ENCODE measurements at regions of chr6 and their contacts with region 1.

Region 1: GRCh38 chr6:88165844-88166492 is at the start of gene CNR1:
- DNase-seq: peak; percentile 83
- H3K4me3 ChIP-seq: peak within 1 kb of the TSS; percentile 97
- H3K27ac ChIP-seq: peak within 1 kb of the TSS; percentile 80
- H3K4me1 ChIP-seq: peaks cover 45% of the 10 kb centered on the region
- CTCF ChIP-seq: peak; percentile 36; the same call in 1 of the 2 replicates
- total RNA-seq, gene CNR1: 109 and 150 TPM in 2 replicates

Region 2: GRCh38 chr6:87472525-87473418 is 693.2 kb before region 1 on chr6 and contains the start of gene SLC35A1:
- CTCF ChIA-PET with region 1: no interaction called
- POLR2A ChIA-PET with region 1: interaction called, 3 read pairs
- intact Hi-C with region 1: loop called (anchors 5 kb)
- DNase-seq: peak; percentile 86
- H3K4me3 ChIP-seq: peak within 1 kb of the TSS; percentile 74
- H3K27ac ChIP-seq: peak within 1 kb of the TSS; percentile 35
- H3K4me1 ChIP-seq: peaks cover 25% of the 10 kb centered on the region
- CTCF ChIP-seq: 0 out of 2 replicates have a peak, but pooled peaks have one; percentile 27
- total RNA-seq, gene SLC35A1: 17.0 and 17.2 TPM in 2 replicates

Region 3: DNA sequence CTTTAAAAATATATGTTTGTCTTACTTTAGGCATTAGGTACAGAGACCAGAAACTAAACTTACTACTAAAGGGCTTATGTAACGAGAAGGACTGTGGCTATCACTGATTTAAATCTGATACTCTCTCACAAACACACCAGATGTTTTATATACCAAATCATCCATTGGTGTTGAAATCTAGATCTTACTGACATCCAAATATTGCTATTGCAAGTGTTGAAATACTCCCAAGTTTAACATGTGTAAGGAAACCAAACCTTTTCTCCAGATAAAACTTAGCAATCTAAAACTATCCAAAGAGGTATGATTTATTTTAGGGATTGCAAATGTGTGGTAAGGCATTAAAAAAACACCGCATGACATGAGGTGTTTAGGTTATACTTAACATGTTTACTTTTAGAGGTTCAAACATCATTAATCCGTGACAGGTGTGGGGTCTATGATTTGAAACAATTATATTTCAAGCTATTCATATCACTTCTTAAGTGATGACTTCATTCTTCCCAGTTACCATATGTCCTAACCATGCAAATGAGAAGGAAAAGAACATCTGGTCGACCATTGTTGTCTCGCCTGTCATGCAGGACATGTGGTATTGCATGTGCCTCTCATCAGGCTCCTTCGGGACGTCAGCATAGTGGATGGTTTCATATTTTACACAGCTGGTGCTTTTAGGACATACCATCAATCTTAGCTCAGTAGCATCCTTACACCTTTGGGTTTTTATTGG is 286.7 kb before region 1 on chr6:
- CTCF ChIA-PET with region 1: no interaction called
- POLR2A ChIA-PET with region 1: interaction called, 12 read pairs
- intact Hi-C with region 1: loop called (anchors 1 kb)
- DNase-seq: peak; percentile 100
- H3K4me3 ChIP-seq: peak overlapping the region; percentile 11
- H3K27ac ChIP-seq: peak overlapping the region; percentile 99
- H3K4me1 ChIP-seq: peaks cover 78% of the 10 kb centered on the region
- CTCF ChIP-seq: no peak

Region 4: DNA sequence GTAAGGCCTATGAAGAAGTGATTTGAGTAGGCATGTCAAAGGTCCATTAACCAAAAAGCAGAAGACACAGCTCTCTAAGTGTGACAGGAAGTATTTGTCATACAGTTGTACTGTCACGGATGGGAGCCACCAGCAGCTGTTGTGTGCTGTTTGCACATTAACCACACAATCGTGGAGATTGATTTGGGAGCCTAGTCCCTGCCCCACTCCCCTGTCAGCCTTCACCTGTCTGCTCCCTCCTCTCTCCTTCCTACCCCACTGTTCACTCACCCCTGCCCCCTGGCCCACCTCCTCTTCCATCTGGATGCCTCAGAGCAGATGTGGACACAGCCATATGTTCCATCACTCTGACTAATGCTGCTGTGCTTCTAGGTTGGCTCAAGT is 243.0 kb before region 1 on chr6:
- CTCF ChIA-PET with region 1: no interaction called
- POLR2A ChIA-PET with region 1: interaction called, 153 read pairs
- intact Hi-C with region 1: loop called (anchors 1 kb)
- DNase-seq: peak; percentile 98
- H3K4me3 ChIP-seq: peak overlapping the region; percentile 31
- H3K27ac ChIP-seq: peak overlapping the region; percentile 99
- H3K4me1 ChIP-seq: peaks cover 99% of the 10 kb centered on the region
- CTCF ChIP-seq: no peak

Region 5: DNA sequence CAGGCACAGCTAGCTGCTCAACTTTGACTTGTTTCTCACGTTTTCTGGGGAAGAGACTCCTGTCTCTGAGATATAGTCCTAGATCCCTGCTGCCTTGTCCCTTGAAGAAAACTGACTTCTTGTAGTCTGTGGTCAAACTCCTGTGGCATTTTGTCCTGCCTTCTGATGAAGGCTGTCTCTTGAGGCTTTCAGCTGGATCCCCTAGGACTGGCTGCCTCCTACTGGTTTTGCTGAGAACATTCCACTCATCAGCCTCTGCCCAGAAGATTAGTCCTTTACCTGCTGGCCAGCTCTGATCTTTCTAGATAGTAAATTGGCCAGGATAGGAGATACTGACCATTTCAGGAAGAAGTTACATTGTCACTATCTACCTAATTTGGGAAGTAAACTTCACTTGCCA is 72.1 kb after region 1 on chr6:
- CTCF ChIA-PET with region 1: no interaction called
- POLR2A ChIA-PET with region 1: interaction called, 3 read pairs
- intact Hi-C with region 1: loop called (anchors 2 kb)
- DNase-seq: peak; percentile 74
- H3K4me3 ChIP-seq: no peak overlapping the region
- H3K27ac ChIP-seq: no peak overlapping the region
- H3K4me1 ChIP-seq: peaks cover 17% of the 10 kb centered on the region
- CTCF ChIP-seq: peak; percentile 88